ENCODE measurements at regions of chr6 and their contacts with region 1.

Region 1: GRCh38 chr6:170295510-170296422 is 4.9 kb upstream of the DLL1 start:
- DNase-seq: peak in 1 of 4 donors; percentile 81
- ATAC-seq: peak; percentile 52
- H3K4me3 ChIP-seq: peak overlapping the region; percentile 38 to 46
- H3K27ac ChIP-seq: no peak overlapping the region
- H3K4me1 ChIP-seq: peaks cover 27 to 58% of the 10 kb centered on the region in 2 donors
- H3K27me3 ChIP-seq: peaks cover 60 to 95% of the 10 kb centered on the region in 2 donors
- CTCF ChIP-seq: no peak

Region 2: GRCh38 chr6:169669889-169670288 is 625.9 kb before region 1 on chr6:
- intact Hi-C with region 1: no loop called
- DNase-seq: no peak
- ATAC-seq: peak; percentile 62
- H3K4me3 ChIP-seq: no peak overlapping the region
- H3K27ac ChIP-seq: peak overlapping the region in 1 of 2 donors; percentile 38
- H3K4me1 ChIP-seq: peaks cover 0 to 9% of the 10 kb centered on the region in 2 donors
- H3K27me3 ChIP-seq: no peaks in the 10 kb centered on the region
- CTCF ChIP-seq: no peak

Region 3: GRCh38 chr6:169831450-169832246 is 464.1 kb before region 1 on chr6:
- intact Hi-C with region 1: loop called in 1 of 2 experiments (anchors 10 kb)
- DNase-seq: peak; percentile 67 to 91 (median 75)
- ATAC-seq: peak; percentile 98
- H3K4me3 ChIP-seq: no peak overlapping the region
- H3K27ac ChIP-seq: no peak overlapping the region
- H3K4me1 ChIP-seq: peaks cover 0 to 10% of the 10 kb centered on the region in 2 donors
- H3K27me3 ChIP-seq: peaks cover 0 to 22% of the 10 kb centered on the region in 2 donors
- CTCF ChIP-seq: peak; percentile 89 to 91

Region 4: DNA sequence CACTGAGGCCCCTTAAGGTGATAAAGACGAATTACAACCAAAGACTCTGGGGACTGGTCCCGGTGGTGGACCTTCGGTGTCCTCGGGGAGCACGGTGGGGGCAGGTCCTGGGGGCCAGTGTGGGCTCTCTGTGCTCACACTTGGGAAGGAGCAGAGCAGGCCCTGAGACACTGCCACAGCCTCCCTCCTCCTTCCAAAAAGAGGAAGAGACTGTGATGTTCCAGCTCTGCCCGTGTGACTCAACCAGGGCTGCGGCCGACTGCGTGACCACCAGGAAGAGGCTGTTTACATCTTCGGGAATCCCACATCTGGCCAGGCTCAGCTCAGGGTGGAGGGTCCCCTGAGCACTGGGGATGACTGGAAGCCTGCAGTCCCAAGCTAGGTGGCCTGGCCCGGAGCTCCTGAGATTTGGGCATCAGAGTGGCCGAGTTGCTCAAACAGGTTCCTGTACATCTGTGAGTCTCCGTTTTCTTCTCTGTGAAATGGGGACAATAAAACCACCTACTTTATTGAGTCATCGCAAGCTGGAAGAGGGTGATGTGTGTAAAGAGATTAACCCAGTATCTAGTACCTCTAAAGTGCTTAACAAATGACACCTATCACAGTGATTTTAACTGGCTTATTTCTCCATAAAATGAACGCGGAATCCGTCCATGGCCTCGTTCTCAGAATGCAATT is 247.1 kb before region 1 on chr6:
- intact Hi-C with region 1: no loop called
- DNase-seq: peak in 2 of 4 donors; percentile 84 to 88
- ATAC-seq: peak; percentile 72
- H3K4me3 ChIP-seq: no peak overlapping the region
- H3K27ac ChIP-seq: peak overlapping the region in 1 of 2 donors; percentile 83
- H3K4me1 ChIP-seq: peaks cover 5 to 41% of the 10 kb centered on the region in 2 donors
- H3K27me3 ChIP-seq: peaks cover 0 to 23% of the 10 kb centered on the region in 2 donors
- CTCF ChIP-seq: no peak

Region 5: GRCh38 chr6:170080828-170081371 is 214.9 kb before region 1 on chr6:
- intact Hi-C with region 1: no loop called
- DNase-seq: peak in 2 of 4 donors; percentile 24 to 72
- ATAC-seq: no peak
- H3K4me3 ChIP-seq: no peak overlapping the region
- H3K27ac ChIP-seq: no peak overlapping the region
- H3K4me1 ChIP-seq: no peaks in the 10 kb centered on the region
- H3K27me3 ChIP-seq: peaks cover 0 to 32% of the 10 kb centered on the region in 2 donors
- CTCF ChIP-seq: no peak

Region 6: DNA sequence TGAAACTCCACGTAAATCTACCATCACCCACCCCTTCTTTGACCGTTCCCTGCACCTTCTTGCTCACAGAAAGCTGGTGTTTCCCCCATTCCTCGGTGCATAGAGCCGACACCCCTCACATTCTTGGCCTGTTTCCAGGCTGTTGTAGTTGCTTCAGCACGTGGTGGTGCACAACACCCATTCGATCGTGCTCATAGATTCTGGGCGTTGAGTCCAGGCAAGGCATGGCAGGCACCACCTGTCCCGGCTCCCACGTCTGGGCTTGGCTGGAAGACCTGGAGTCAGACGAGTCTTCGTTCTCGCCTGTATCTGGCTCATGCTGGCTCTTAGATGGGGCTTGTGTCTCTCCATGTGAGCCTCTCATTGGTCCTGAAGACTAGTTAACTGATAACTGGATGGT is 111.4 kb after region 1 on chr6:
- intact Hi-C with region 1: no loop called
- DNase-seq: no peak
- ATAC-seq: no peak
- H3K4me3 ChIP-seq: no peak overlapping the region
- H3K27ac ChIP-seq: no peak overlapping the region
- H3K4me1 ChIP-seq: no peaks in the 10 kb centered on the region
- H3K27me3 ChIP-seq: no peaks in the 10 kb centered on the region
- CTCF ChIP-seq: no peak

Measured in left lung (tissue), 14 donors.